WTC11 (cell line): ENCODE measurements at regions of chr3 and their contacts with region 1.

Region 1: GRCh38 chr3:43113671-43114070 is 7.8 kb upstream of the POMGNT2 start:
- DNase-seq: no peak
- ATAC-seq: no peak
- H3K4me3 Mint-ChIP-seq: no peak overlapping the region
- H3K27ac Mint-ChIP-seq: no peak overlapping the region
- H3K4me1 Mint-ChIP-seq: peaks cover 3% of the 10 kb centered on the region; the same call in 1 of the 2 replicates
- H3K27me3 Mint-ChIP-seq: peaks cover 10% of the 10 kb centered on the region
- CTCF ChIP-seq: no peak

Region 2: DNA sequence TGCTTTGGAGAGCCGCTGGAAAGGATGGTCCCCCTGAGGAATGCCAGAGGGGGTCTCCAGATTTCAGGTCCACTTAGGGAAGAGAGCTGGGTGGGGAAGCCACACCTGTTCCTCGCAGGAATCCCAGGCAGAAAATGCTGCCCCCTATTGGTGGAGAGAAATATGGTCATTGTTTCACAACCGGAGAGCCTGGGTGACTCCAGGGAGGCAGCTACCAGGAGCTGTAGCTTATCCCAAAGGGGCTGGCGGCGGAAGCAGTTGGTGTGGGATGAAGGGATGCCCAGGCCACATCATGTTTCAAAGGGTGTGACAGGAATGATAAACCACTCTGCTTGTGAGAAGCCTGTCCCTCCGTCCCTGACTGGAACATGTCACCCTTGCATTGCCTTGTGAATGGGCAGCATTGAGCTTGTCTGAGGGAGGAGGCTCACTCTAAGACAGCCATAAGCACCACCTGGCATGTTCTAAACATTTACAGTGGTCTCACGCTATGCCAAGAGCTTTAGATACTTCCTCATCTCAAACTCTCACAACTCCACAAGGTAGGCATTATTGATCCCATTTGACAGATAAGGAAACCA is 42.3 kb before region 1 on chr3:
- CTCF ChIA-PET with region 1: interaction called, 13 read pairs
- POLR2A ChIA-PET with region 1: no interaction called
- DNase-seq: peak; percentile 43
- ATAC-seq: peak; percentile 87
- H3K4me3 Mint-ChIP-seq: no peak overlapping the region
- H3K27ac Mint-ChIP-seq: no peak overlapping the region
- H3K4me1 Mint-ChIP-seq: no peaks in the 10 kb centered on the region
- H3K27me3 Mint-ChIP-seq: no peaks in the 10 kb centered on the region; the same call in 1 of the 2 replicates
- CTCF ChIP-seq: peak; percentile 87